ENCODE measurements at regions of chr13 and their contacts with region 1.

Region 1: DNA sequence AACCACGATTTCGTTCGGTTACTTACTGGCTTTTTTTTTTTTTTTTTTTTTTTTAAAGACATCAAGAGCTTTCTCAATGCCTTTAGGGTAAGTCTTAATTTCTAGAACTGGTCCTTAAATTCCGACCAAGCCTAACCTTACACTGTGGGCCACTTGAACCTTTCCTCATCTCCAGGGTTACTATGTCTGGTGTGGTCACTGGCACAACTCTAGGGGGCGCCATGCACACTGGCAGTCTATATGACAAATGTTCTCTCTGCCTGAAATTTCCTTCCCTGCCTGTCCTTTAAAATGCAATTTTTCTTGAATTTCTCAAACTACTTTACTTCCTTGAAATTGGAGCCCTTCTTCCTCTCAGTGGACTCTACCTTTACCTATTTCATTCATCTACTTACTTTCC is 227.4 kb downstream of the KLF5 start:
- DNase-seq: no peak
- ATAC-seq: no peak
- H3K4me3 ChIP-seq: no peak overlapping the region
- H3K4me3 Mint-ChIP-seq: no peak overlapping the region
- H3K27ac ChIP-seq: no peak overlapping the region
- H3K27ac Mint-ChIP-seq: no peak overlapping the region
- H3K4me1 ChIP-seq: no peaks in the 10 kb centered on the region
- H3K4me1 Mint-ChIP-seq: no peaks in the 10 kb centered on the region
- H3K27me3 ChIP-seq: no peaks in the 10 kb centered on the region
- H3K27me3 Mint-ChIP-seq: peaks cover 7 to 11% of the 10 kb centered on the region in 2 donors

Region 2: GRCh38 chr13:73179906-73180305 is 106.3 kb before region 1 on chr13:
- CTCF ChIA-PET with region 1: no interaction called
- POLR2A ChIA-PET with region 1: no interaction called
- DNase-seq: no peak
- ATAC-seq: no peak
- H3K4me3 ChIP-seq: no peak overlapping the region
- H3K4me3 Mint-ChIP-seq: no peak overlapping the region
- H3K27ac ChIP-seq: no peak overlapping the region
- H3K27ac Mint-ChIP-seq: no peak overlapping the region
- H3K4me1 ChIP-seq: no peaks in the 10 kb centered on the region
- H3K4me1 Mint-ChIP-seq: no peaks in the 10 kb centered on the region
- H3K27me3 ChIP-seq: peaks cover 0 to 2% of the 10 kb centered on the region in 2 experiments
- H3K27me3 Mint-ChIP-seq: no peaks in the 10 kb centered on the region

Region 3: GRCh38 chr13:73216381-73216831 is 69.8 kb before region 1 on chr13:
- CTCF ChIA-PET with region 1: no interaction called
- POLR2A ChIA-PET with region 1: interaction called in 1 of 2 experiments, 10 read pairs
- DNase-seq: no peak
- ATAC-seq: no peak
- H3K4me3 ChIP-seq: no peak overlapping the region
- H3K4me3 Mint-ChIP-seq: no peak overlapping the region
- H3K27ac ChIP-seq: no peak overlapping the region
- H3K27ac Mint-ChIP-seq: no peak overlapping the region
- H3K4me1 ChIP-seq: peaks cover 0 to 6% of the 10 kb centered on the region in 2 experiments
- H3K4me1 Mint-ChIP-seq: peaks cover 11 to 19% (median 11%) of the 10 kb centered on the region in 3 donors
- H3K27me3 ChIP-seq: peaks cover 0 to 3% of the 10 kb centered on the region in 2 experiments
- H3K27me3 Mint-ChIP-seq: peaks cover 2 to 3% of the 10 kb centered on the region in 2 donors

Region 4: DNA sequence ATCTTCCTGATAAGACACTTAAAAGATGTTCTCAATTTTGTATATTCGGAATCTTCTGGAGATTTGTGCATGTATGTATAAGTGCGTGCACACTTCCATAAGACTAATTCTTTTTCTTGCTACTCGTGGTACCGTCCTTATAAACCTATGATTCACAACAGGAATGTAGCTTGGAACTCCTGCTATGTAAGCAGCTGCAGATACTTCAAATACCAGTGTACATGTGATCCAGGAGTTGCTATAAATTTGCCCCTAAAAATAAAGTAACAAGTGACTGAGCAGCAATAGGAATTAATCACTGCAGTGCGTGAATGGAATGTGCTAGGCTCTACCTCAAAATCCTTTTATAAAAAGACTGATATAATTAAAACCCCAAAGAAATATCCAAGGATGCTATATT is 12.4 kb before region 1 on chr13:
- CTCF ChIA-PET with region 1: no interaction called
- POLR2A ChIA-PET with region 1: no interaction called
- DNase-seq: no peak
- ATAC-seq: no peak
- H3K4me3 ChIP-seq: no peak overlapping the region
- H3K4me3 Mint-ChIP-seq: no peak overlapping the region
- H3K27ac ChIP-seq: no peak overlapping the region
- H3K27ac Mint-ChIP-seq: no peak overlapping the region
- H3K4me1 ChIP-seq: peaks cover 0 to 2% of the 10 kb centered on the region in 2 experiments
- H3K4me1 Mint-ChIP-seq: peaks cover 6 to 16% (median 15%) of the 10 kb centered on the region in 3 donors
- H3K27me3 ChIP-seq: no peaks in the 10 kb centered on the region
- H3K27me3 Mint-ChIP-seq: no peaks in the 10 kb centered on the region

Measured in T-cell (primary cell).